CD8-positive, alpha-beta T cell (primary cell): ENCODE measurements at regions of chr6 and their contacts with region 1.

Region 1: GRCh38 chr6:117674991-117675657 is at the start of gene NUS1:
- DNase-seq: peak; percentile 98 to 99 (median 98)
- ATAC-seq: peak; percentile 96
- H3K4me3 ChIP-seq: peak within 1 kb of the TSS; percentile 75 to 79
- H3K4me3 Mint-ChIP-seq: peak within 1 kb of the TSS; percentile 91
- H3K27ac ChIP-seq: peak within 1 kb of the TSS; percentile 60 to 87
- H3K27ac Mint-ChIP-seq: peak within 1 kb of the TSS; percentile 94
- H3K4me1 ChIP-seq: peaks cover 38% of the 10 kb centered on the region
- H3K4me1 Mint-ChIP-seq: peaks cover 50% of the 10 kb centered on the region
- H3K27me3 ChIP-seq: no peaks in the 10 kb centered on the region
- H3K27me3 Mint-ChIP-seq: no peaks in the 10 kb centered on the region
- CTCF ChIP-seq: peak; percentile 67
- total RNA-seq, gene NUS1: 28.3 to 29.0 TPM

Region 2: GRCh38 chr6:116570856-116571682 is 1104.1 kb before region 1 on chr6 and contains the start of gene RWDD1:
- CTCF ChIA-PET with region 1: no interaction called
- POLR2A ChIA-PET with region 1: no interaction called
- intact Hi-C with region 1: loop called (anchors 2 to 10 kb)
- DNase-seq: peak; percentile 94 to 99 (median 98)
- ATAC-seq: peak; percentile 95
- H3K4me3 ChIP-seq: peak within 1 kb of the TSS; percentile 75 to 93
- H3K4me3 Mint-ChIP-seq: peak within 1 kb of the TSS; percentile 99
- H3K27ac ChIP-seq: peak within 1 kb of the TSS; percentile 92 to 99
- H3K27ac Mint-ChIP-seq: peak within 1 kb of the TSS; percentile 99
- H3K4me1 ChIP-seq: peaks cover 32% of the 10 kb centered on the region
- H3K4me1 Mint-ChIP-seq: peaks cover 52% of the 10 kb centered on the region
- H3K27me3 ChIP-seq: no peaks in the 10 kb centered on the region
- H3K27me3 Mint-ChIP-seq: no peaks in the 10 kb centered on the region
- CTCF ChIP-seq: no peak
- total RNA-seq, gene RWDD1: 65.1 to 68.7 TPM

Region 3: GRCh38 chr6:116680975-116681808 is 993.9 kb before region 1 on chr6 and contains the start of gene KPNA5:
- CTCF ChIA-PET with region 1: no interaction called
- POLR2A ChIA-PET with region 1: no interaction called
- intact Hi-C with region 1: loop called in 1 of 2 experiments (anchors 1 kb)
- DNase-seq: peak; percentile 85 to 96 (median 92)
- ATAC-seq: peak; percentile 93
- H3K4me3 ChIP-seq: peak within 1 kb of the TSS; percentile 95 to 97
- H3K4me3 Mint-ChIP-seq: peak within 1 kb of the TSS; percentile 96
- H3K27ac ChIP-seq: peak within 1 kb of the TSS; percentile 93 to 94
- H3K27ac Mint-ChIP-seq: peak within 1 kb of the TSS; percentile 99
- H3K4me1 ChIP-seq: peaks cover 17% of the 10 kb centered on the region
- H3K4me1 Mint-ChIP-seq: peaks cover 50% of the 10 kb centered on the region
- H3K27me3 ChIP-seq: no peaks in the 10 kb centered on the region
- H3K27me3 Mint-ChIP-seq: no peaks in the 10 kb centered on the region
- CTCF ChIP-seq: no peak
- total RNA-seq, gene KPNA5: 56.3 to 57.4 TPM

Region 4: GRCh38 chr6:117222861-117223260 is 452.3 kb before region 1 on chr6:
- CTCF ChIA-PET with region 1: no interaction called
- POLR2A ChIA-PET with region 1: no interaction called
- intact Hi-C with region 1: no loop called
- DNase-seq: no peak
- ATAC-seq: no peak
- H3K4me3 ChIP-seq: no peak overlapping the region
- H3K4me3 Mint-ChIP-seq: no peak overlapping the region
- H3K27ac ChIP-seq: no peak overlapping the region
- H3K27ac Mint-ChIP-seq: no peak overlapping the region
- H3K4me1 ChIP-seq: no peaks in the 10 kb centered on the region
- H3K4me1 Mint-ChIP-seq: no peaks in the 10 kb centered on the region
- H3K27me3 ChIP-seq: no peaks in the 10 kb centered on the region
- H3K27me3 Mint-ChIP-seq: no peaks in the 10 kb centered on the region
- CTCF ChIP-seq: no peak

Region 5: DNA sequence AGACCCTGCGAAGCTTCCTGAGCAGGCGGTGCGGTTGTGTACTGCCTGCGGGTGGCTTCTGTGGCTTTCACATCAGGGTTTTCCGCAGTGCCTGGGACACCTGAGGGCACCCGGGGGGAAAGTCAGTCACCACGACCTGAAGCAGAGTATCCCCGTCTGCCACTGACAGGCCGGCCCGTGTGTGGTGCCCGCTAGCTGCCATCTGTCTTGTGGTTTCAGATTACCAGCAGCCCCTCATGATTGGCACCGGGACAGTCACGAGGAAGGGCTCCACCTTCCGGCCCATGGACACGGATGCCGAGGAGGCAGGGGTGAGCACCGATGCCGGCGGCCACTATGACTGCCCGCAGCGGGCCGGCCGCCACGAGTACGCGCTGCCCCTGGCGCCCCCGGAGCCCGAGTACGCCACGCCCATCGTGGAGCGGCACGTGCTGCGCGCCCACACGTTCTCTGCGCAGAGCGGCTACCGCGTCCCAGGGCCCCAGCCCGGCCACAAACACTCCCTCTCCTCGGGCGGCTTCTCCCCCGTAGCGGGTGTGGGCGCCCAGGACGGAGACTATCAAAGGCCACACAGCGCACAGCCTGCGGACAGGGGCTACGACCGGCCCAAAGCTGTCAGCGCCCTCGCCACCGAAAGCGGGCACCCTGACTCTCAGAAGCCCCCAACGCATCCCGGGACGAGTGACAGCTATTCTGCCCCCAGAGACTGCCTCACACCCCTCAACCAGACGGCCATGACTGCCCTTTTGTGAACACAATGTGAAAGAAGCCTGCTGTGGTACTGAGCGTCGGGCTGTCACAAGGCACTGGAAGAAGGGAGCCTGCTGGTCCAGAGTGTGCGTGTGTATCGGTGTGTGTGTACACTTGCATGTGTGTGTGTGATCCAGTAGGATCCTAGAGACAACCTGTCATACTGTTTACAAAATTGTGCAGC is 127.2 kb before region 1 on chr6:
- CTCF ChIA-PET with region 1: no interaction called
- POLR2A ChIA-PET with region 1: no interaction called
- intact Hi-C with region 1: loop called in 1 of 2 experiments (anchors 2 kb)
- DNase-seq: peak; percentile 12 to 76 (median 50)
- ATAC-seq: peak; percentile 42
- H3K4me3 ChIP-seq: peak overlapping the region; percentile 55 to 69
- H3K4me3 Mint-ChIP-seq: peak overlapping the region; percentile 85
- H3K27ac ChIP-seq: peak overlapping the region; percentile 64 to 70
- H3K27ac Mint-ChIP-seq: peak overlapping the region; percentile 92
- H3K4me1 ChIP-seq: peaks cover 35% of the 10 kb centered on the region
- H3K4me1 Mint-ChIP-seq: peaks cover 43% of the 10 kb centered on the region
- H3K27me3 ChIP-seq: no peaks in the 10 kb centered on the region
- H3K27me3 Mint-ChIP-seq: no peaks in the 10 kb centered on the region
- CTCF ChIP-seq: no peak

Region 6: DNA sequence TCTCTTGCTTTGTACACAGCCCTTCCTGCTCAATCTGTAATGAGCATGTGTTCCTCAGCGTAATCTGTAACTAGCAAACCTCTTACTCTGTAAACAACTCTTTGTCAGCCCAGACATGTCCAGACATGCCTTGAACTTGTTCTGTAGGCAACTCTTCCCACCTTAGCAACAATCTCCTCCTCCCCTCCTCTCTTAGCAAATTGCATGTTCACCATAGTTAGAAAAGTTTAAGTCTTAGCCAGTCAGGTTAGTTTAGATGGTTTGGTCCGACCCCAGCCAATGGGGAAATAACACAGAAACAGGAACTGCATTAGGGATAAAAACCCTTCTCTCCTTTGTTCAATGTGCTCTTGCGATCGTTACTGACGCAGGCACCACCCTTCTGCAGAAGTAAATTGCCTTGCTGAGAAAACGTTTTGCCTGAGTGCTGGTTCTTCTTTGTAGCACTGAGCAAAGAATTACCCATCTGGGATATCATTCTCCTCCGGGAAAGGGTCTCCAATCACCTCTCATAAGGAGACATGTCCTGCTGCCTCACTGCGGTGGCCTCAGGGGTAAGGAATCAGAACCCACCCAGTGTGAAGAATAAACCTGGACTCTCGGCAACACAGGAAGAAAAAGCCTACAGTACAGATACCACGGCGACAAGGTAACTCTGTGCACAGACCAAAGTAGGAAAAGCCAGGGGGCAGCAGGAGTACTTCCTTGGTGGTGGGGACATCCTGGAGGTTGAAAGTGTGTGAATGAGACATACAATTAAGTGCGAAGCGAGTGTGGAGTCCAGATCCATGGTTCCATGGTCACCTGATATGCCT is 899.1 kb after region 1 on chr6:
- CTCF ChIA-PET with region 1: no interaction called
- POLR2A ChIA-PET with region 1: no interaction called
- intact Hi-C with region 1: loop called in 1 of 2 experiments (anchors 10 kb)
- DNase-seq: no peak
- ATAC-seq: no peak
- H3K4me3 ChIP-seq: no peak overlapping the region
- H3K4me3 Mint-ChIP-seq: no peak overlapping the region
- H3K27ac ChIP-seq: peak overlapping the region in 1 of 2 experiments; percentile 28
- H3K27ac Mint-ChIP-seq: peak overlapping the region; percentile 47
- H3K4me1 ChIP-seq: no peaks in the 10 kb centered on the region
- H3K4me1 Mint-ChIP-seq: peaks cover 16% of the 10 kb centered on the region
- H3K27me3 ChIP-seq: no peaks in the 10 kb centered on the region
- H3K27me3 Mint-ChIP-seq: no peaks in the 10 kb centered on the region
- CTCF ChIP-seq: no peak

Region 7: GRCh38 chr6:119349323-119350042 is 1674.4 kb after region 1 on chr6 and contains the start of gene MAN1A1:
- CTCF ChIA-PET with region 1: no interaction called
- POLR2A ChIA-PET with region 1: no interaction called
- intact Hi-C with region 1: loop called (anchors 10 kb)
- DNase-seq: peak; percentile 79 to 94 (median 88)
- ATAC-seq: peak; percentile 86
- H3K4me3 ChIP-seq: peak within 1 kb of the TSS; percentile 91 to 92
- H3K4me3 Mint-ChIP-seq: peak within 1 kb of the TSS; percentile 90
- H3K27ac ChIP-seq: peak within 1 kb of the TSS; percentile 65 to 67
- H3K27ac Mint-ChIP-seq: peak within 1 kb of the TSS; percentile 88
- H3K4me1 ChIP-seq: peaks cover 30% of the 10 kb centered on the region
- H3K4me1 Mint-ChIP-seq: peaks cover 45% of the 10 kb centered on the region
- H3K27me3 ChIP-seq: no peaks in the 10 kb centered on the region
- H3K27me3 Mint-ChIP-seq: no peaks in the 10 kb centered on the region
- CTCF ChIP-seq: no peak
- total RNA-seq, gene MAN1A1: 8.4 to 8.5 TPM